Endothelial cell of umbilical vein (primary cell): ENCODE measurements at regions of chr2 and their contacts with region 1.

Region 1: DNA sequence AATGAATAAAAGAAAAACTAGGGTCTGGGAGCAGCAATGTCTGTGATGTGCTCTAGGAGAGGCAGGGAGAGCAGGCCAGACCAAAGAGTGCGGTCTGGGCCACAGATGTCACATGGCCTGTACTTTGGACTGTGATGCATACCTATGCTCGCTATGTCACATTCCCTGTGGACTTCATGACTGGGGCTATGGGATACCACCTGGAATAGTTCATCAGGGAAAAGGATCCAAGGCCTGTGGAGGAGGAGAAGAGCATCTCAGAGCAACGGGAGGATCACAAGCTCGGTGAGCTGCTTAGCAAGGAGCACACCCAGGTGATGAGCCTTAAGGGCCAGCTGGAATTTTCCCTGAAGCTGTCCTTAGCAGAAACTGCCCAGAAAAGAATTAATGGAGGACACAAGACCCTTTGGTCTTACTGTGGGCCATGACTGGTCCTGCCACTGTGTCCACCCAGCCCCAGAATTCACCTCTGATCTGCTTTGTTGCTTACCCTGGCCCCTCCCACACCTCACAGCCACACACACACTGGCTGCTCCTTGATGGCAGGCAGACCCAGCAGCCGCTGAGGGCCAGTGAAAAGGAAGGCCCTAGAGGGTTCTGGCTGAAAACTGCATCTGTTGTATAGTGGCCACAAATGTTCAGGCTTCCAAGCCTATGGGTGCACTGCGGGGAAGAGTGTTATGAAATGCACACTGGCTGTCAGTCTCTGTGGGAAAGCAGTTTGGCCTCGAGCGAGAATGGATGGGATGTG is 25.3 kb upstream of the GCC2 start:
- DNase-seq: no peak
- H3K4me3 ChIP-seq: no peak overlapping the region
- H3K27ac ChIP-seq: no peak overlapping the region
- H3K4me1 ChIP-seq: no peaks in the 10 kb centered on the region
- H3K27me3 ChIP-seq: peaks cover 9 to 11% of the 10 kb centered on the region in 2 experiments
- CTCF ChIP-seq: no peak
- POLR2A ChIP-seq: no peak

Region 2: GRCh38 chr2:108315444-108315934 is 108.2 kb before region 1 on chr2:
- CTCF ChIA-PET with region 1: no interaction called
- POLR2A ChIA-PET with region 1: no interaction called
- dilution Hi-C with region 1: no loop called
- intact Hi-C with region 1: no loop called
- DNase-seq: no peak
- H3K4me3 ChIP-seq: no peak overlapping the region
- H3K27ac ChIP-seq: no peak overlapping the region
- H3K4me1 ChIP-seq: no peaks in the 10 kb centered on the region
- H3K27me3 ChIP-seq: peaks cover 0 to 4% of the 10 kb centered on the region in 2 experiments
- CTCF ChIP-seq: no peak
- POLR2A ChIP-seq: no peak

Region 3: GRCh38 chr2:108460345-108461037 is 36.8 kb after region 1 on chr2:
- CTCF ChIA-PET with region 1: no interaction called
- POLR2A ChIA-PET with region 1: no interaction called
- dilution Hi-C with region 1: no loop called
- intact Hi-C with region 1: loop called (anchors 2 kb)
- DNase-seq: no peak
- H3K4me3 ChIP-seq: no peak overlapping the region
- H3K27ac ChIP-seq: no peak overlapping the region
- H3K4me1 ChIP-seq: no peaks in the 10 kb centered on the region
- H3K27me3 ChIP-seq: no peaks in the 10 kb centered on the region
- CTCF ChIP-seq: no peak
- POLR2A ChIP-seq: no peak